ENCODE measurements at regions of chr6 and their contacts with region 1.

Region 1: DNA sequence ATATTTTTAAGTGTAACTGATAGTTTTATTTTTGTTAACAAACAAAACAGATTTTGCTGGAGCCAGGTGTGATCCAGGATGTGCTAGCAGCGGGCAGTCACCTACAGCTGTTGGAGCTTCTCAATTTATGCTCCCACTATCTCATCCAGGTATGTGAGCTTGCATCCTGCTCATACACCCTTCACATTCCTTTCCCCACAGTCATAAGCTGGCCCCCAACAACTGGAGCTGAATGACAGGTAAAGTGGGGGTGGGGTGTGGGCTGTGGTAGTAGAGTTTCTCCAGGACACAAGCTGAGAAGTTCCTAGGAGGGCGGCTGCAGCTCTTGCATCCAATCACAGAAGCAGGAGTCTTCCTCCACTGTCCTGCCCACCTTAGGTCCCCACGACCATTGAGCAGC is 140.1 kb downstream of the KLHL32 start:
- DNase-seq: no peak
- ATAC-seq: no peak
- H3K4me3 ChIP-seq: no peak overlapping the region
- H3K27ac ChIP-seq: no peak overlapping the region
- H3K4me1 ChIP-seq: peaks cover 0 to 3% (median 0%) of the 10 kb centered on the region in 4 donors
- H3K27me3 ChIP-seq: no peaks in the 10 kb centered on the region
- CTCF ChIP-seq: no peak
- POLR2A ChIP-seq: no peak

Region 2: GRCh38 chr6:96626759-96627364 is 437.7 kb before region 1 on chr6:
- intact Hi-C with region 1: loop called in 1 of 2 experiments (anchors 5 kb)
- DNase-seq: no peak
- ATAC-seq: peak; percentile 64 to 82 (median 65)
- H3K4me3 ChIP-seq: no peak overlapping the region
- H3K27ac ChIP-seq: no peak overlapping the region
- H3K4me1 ChIP-seq: no peaks in the 10 kb centered on the region
- H3K27me3 ChIP-seq: no peaks in the 10 kb centered on the region
- CTCF ChIP-seq: peak; percentile 32 to 49 (median 41)
- POLR2A ChIP-seq: no peak

Region 3: GRCh38 chr6:97215157-97215769 is 150.7 kb after region 1 on chr6:
- intact Hi-C with region 1: no loop called
- DNase-seq: no peak
- ATAC-seq: peak in 3 of 4 donors; percentile 55 to 83 (median 79)
- H3K4me3 ChIP-seq: no peak overlapping the region
- H3K27ac ChIP-seq: no peak overlapping the region
- H3K4me1 ChIP-seq: no peaks in the 10 kb centered on the region
- H3K27me3 ChIP-seq: no peaks in the 10 kb centered on the region
- CTCF ChIP-seq: peak in 3 of 4 donors; percentile 29 to 46 (median 41)
- POLR2A ChIP-seq: no peak

Region 4: DNA sequence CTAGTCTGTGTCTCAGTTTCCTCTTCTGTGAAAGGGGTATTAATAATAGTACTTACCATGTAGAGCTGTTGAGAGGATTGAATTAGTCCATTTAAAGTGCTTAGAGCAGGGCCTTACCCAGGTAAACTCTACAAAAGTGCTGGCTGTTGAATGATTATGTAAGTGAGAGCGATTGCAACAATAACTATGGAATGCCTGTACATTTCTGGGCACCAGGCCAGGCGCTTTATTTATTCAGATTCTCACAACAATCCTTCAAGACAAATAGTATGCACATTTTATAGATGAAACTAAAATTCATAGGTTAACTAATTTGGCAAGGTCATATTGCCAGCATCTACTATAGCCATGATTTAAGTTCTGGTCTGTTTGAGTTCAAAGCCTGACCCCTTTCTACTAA is 296.7 kb after region 1 on chr6:
- intact Hi-C with region 1: no loop called
- DNase-seq: no peak
- ATAC-seq: no peak
- H3K4me3 ChIP-seq: no peak overlapping the region
- H3K27ac ChIP-seq: no peak overlapping the region
- H3K4me1 ChIP-seq: no peaks in the 10 kb centered on the region
- H3K27me3 ChIP-seq: no peaks in the 10 kb centered on the region
- CTCF ChIP-seq: no peak
- POLR2A ChIP-seq: no peak

Measured in right lobe of liver (tissue), 6 donors.